CD8-positive, alpha-beta T cell (primary cell): ENCODE measurements at regions of chr13 and their contacts with region 1.

Region 1: DNA sequence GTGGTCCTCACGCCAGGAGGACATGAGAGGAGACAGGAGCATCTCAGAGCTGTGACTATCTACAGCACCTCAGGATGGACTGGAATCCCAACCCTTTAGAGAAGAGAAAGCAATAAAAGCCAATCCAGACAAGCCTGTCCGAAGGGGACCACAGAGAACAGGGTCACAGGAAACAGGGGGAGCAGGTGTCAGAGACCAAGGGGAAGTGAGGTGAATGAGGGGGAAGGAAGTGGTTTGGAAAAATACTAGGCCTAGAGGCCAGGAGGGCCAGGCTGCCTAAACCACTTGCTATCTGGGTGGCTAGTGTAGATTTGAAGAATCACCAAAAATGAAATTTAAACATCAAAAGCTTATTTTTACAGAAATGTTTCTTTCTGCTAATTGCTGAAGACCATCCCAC is 16.2 kb downstream of the TMTC4 start:
- DNase-seq: peak in 3 of 9 experiments; percentile 31 to 47 (median 42)
- ATAC-seq: no peak
- H3K4me3 ChIP-seq: no peak overlapping the region
- H3K4me3 Mint-ChIP-seq: peak overlapping the region; percentile 16
- H3K27ac ChIP-seq: no peak overlapping the region
- H3K27ac Mint-ChIP-seq: no peak overlapping the region
- H3K4me1 ChIP-seq: peaks cover 15% of the 10 kb centered on the region
- H3K4me1 Mint-ChIP-seq: peaks cover 19% of the 10 kb centered on the region
- H3K27me3 ChIP-seq: no peaks in the 10 kb centered on the region
- H3K27me3 Mint-ChIP-seq: no peaks in the 10 kb centered on the region
- CTCF ChIP-seq: no peak

Region 2: DNA sequence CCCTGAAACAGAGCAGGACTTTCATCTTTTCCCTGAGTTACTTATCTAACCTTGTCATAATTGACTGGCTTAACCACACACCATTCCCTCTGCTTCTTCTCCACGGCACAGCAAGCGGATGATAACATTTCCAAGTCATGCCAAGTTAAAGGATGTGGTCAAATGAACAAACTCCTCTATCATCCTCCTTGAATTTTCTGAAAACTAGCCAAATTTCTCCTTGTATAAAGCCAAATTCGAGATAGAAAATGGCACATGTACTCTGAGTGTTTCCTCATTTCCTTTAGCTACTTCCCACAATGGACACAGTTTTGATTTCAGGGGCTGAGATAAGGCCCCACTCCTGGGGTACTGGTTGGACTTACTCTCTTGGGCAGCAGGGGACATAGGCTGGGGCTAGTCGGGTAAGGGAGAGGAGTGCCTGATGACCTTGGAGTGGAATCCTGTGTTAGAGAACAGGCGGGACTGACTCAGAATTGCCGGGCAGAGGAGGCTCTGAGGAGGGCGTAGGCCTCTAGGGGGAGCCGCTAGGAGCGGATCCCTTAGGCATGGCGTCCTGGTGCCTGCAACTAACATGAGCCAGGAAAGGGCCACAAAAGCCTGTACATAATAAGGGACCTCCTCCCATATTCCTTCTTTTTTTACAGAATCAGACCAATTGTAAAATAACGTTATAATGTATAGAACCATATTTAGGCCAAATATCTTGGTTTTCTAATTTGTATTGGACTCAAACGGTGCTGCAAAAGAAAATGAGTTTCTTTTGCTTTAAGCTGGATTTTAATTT is 36.6 kb after region 1 on chr13:
- CTCF ChIA-PET with region 1: no interaction called
- POLR2A ChIA-PET with region 1: interaction called, 3 read pairs
- intact Hi-C with region 1: loop called in 1 of 2 experiments (anchors 1 kb)
- DNase-seq: peak in 1 of 9 experiments; percentile 16
- ATAC-seq: no peak
- H3K4me3 ChIP-seq: no peak overlapping the region
- H3K4me3 Mint-ChIP-seq: no peak overlapping the region
- H3K27ac ChIP-seq: no peak overlapping the region
- H3K27ac Mint-ChIP-seq: no peak overlapping the region
- H3K4me1 ChIP-seq: no peaks in the 10 kb centered on the region
- H3K4me1 Mint-ChIP-seq: no peaks in the 10 kb centered on the region
- H3K27me3 ChIP-seq: peaks cover 0 to 4% of the 10 kb centered on the region in 2 experiments
- H3K27me3 Mint-ChIP-seq: peaks cover 24% of the 10 kb centered on the region
- CTCF ChIP-seq: no peak

Region 3: GRCh38 chr13:100828226-100828625 is 169.9 kb after region 1 on chr13:
- CTCF ChIA-PET with region 1: no interaction called
- POLR2A ChIA-PET with region 1: no interaction called
- intact Hi-C with region 1: loop called in 1 of 2 experiments (anchors 10 kb)
- DNase-seq: no peak
- ATAC-seq: no peak
- H3K4me3 ChIP-seq: no peak overlapping the region
- H3K4me3 Mint-ChIP-seq: no peak overlapping the region
- H3K27ac ChIP-seq: no peak overlapping the region
- H3K27ac Mint-ChIP-seq: no peak overlapping the region
- H3K4me1 ChIP-seq: no peaks in the 10 kb centered on the region
- H3K4me1 Mint-ChIP-seq: no peaks in the 10 kb centered on the region
- H3K27me3 ChIP-seq: no peaks in the 10 kb centered on the region
- H3K27me3 Mint-ChIP-seq: peaks cover 15% of the 10 kb centered on the region
- CTCF ChIP-seq: no peak

Region 4: DNA sequence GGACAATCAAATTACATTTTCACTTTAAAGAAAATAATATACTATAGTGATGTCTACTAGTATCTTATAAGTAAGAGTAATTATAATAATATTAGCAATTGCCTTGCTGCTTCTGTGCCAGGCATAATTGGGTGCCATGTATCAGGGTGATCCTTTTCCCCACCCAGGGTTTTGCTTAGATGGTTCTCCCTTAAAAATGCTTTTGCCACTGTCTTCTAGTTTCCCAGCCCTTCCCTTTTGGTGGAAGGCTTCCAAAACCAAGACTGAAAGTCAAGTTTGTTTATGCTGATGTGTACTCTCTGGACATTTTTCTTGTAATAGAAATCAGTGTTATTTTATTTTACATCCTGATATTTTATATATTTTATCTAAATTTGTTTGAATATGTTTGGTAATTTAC is 871.9 kb after region 1 on chr13:
- CTCF ChIA-PET with region 1: no interaction called
- POLR2A ChIA-PET with region 1: no interaction called
- intact Hi-C with region 1: no loop called
- DNase-seq: no peak
- ATAC-seq: no peak
- H3K4me3 ChIP-seq: no peak overlapping the region
- H3K4me3 Mint-ChIP-seq: no peak overlapping the region
- H3K27ac ChIP-seq: no peak overlapping the region
- H3K27ac Mint-ChIP-seq: no peak overlapping the region
- H3K4me1 ChIP-seq: no peaks in the 10 kb centered on the region
- H3K4me1 Mint-ChIP-seq: no peaks in the 10 kb centered on the region
- H3K27me3 ChIP-seq: no peaks in the 10 kb centered on the region
- H3K27me3 Mint-ChIP-seq: peaks cover 7% of the 10 kb centered on the region
- CTCF ChIP-seq: no peak